ENCODE measurements at regions of chr20 and their contacts with region 1.

Region 1: GRCh38 chr20:36613974-36614373 is 8.4 kb downstream of the RAB5IF start:
- H3K4me3 Mint-ChIP-seq: no peak overlapping the region
- H3K27ac Mint-ChIP-seq: no peak overlapping the region
- H3K4me1 Mint-ChIP-seq: peaks cover 6% of the 10 kb centered on the region
- H3K27me3 Mint-ChIP-seq: no peaks in the 10 kb centered on the region

Region 2: GRCh38 chr20:36754656-36755222 is 140.8 kb after region 1 on chr20:
- intact Hi-C with region 1: loop called (anchors 1 kb)
- H3K4me3 Mint-ChIP-seq: no peak overlapping the region
- H3K27ac Mint-ChIP-seq: no peak overlapping the region
- H3K4me1 Mint-ChIP-seq: peaks cover 32% of the 10 kb centered on the region
- H3K27me3 Mint-ChIP-seq: no peaks in the 10 kb centered on the region

Measured in dendritic cell treated with granulocyte-macrophage colony-stimulating factor and Interleukin-4, amounts not matched to agents 40 ng/mL and 50 ng/mL, for 4 days (primary cell).